Activated CD8-positive, alpha-beta T cell treated with anti-CD3 and anti-CD28 coated beads for 36 hours (primary cell): ENCODE measurements at regions of chr5 and their contacts with region 1.

Region 1: DNA sequence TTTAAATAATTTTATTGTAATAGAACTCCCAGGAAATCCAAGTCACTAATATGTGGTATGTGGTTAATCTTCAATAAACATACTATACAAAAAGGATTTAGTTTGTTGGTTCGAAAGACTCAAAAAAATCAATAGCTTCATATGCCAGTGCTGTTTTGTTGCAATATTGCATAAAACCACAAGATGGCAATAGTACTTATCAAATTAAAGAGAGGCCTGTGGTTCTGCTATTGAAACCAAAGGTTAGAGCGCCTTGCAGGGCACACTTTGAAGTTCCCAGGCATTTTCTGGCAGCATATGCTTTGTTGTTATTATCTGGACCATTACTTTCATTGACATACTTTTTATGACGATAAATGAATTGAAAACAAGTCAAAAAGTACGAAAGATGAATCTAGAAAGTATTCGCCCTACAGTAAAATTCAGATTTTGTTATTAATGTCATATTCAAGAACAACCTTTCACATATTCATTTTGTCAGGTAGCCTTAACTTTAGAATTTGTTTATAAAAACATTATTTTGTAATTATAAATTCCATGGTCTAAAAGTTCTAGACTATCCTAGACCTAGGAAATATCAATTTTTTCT is 316.3 kb downstream of the MCTP1 start:
- DNase-seq: peak; percentile 28
- ATAC-seq: peak; percentile 68
- H3K4me3 Mint-ChIP-seq: no peak overlapping the region
- H3K27ac Mint-ChIP-seq: no peak overlapping the region
- H3K4me1 Mint-ChIP-seq: no peaks in the 10 kb centered on the region
- H3K27me3 Mint-ChIP-seq: no peaks in the 10 kb centered on the region
- CTCF ChIP-seq: peak; percentile 65

Region 2: DNA sequence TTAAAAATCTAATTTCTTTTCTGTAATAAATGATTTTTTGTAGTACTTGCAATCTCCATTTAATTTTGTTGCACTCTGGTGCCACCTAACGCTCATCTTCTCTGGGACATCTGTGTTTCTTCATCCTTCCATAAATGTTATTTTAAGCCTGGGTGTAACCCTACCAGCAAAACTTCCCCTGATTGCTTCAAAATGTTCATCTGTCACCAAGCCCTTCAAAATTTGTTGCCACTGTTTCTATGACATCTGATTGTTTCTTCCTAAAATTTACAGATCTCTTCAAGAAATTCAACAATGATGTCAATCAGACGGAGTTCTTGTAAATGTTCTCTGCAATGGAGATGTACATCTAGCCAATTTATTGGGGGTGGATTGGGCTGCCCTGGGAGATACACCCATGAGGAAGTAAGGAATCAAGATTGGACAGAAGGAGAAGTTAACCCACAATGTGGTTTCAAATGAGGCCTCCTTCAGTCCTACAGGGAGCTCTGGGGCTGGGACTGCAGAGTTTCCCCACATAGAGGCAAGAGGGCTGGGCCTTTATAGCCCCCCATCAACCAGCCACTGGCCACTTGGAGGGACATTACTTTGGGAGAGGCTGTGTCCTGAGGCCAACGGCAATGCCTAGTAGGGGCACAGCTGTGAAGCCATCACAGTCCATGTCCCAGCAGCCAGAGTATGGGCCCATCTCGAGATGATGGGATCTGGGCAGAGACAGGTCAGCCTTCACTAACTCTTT is 293.0 kb after region 1 on chr5:
- CTCF ChIA-PET with region 1: interaction called, 6 read pairs
- POLR2A ChIA-PET with region 1: no interaction called
- intact Hi-C with region 1: loop called (anchors 1 kb)
- DNase-seq: peak; percentile 35
- ATAC-seq: no peak
- H3K4me3 Mint-ChIP-seq: no peak overlapping the region
- H3K27ac Mint-ChIP-seq: no peak overlapping the region
- H3K4me1 Mint-ChIP-seq: no peaks in the 10 kb centered on the region
- H3K27me3 Mint-ChIP-seq: no peaks in the 10 kb centered on the region
- CTCF ChIP-seq: peak; percentile 44